ENCODE measurements at regions of chr12 and their contacts with region 1.

Region 1: DNA sequence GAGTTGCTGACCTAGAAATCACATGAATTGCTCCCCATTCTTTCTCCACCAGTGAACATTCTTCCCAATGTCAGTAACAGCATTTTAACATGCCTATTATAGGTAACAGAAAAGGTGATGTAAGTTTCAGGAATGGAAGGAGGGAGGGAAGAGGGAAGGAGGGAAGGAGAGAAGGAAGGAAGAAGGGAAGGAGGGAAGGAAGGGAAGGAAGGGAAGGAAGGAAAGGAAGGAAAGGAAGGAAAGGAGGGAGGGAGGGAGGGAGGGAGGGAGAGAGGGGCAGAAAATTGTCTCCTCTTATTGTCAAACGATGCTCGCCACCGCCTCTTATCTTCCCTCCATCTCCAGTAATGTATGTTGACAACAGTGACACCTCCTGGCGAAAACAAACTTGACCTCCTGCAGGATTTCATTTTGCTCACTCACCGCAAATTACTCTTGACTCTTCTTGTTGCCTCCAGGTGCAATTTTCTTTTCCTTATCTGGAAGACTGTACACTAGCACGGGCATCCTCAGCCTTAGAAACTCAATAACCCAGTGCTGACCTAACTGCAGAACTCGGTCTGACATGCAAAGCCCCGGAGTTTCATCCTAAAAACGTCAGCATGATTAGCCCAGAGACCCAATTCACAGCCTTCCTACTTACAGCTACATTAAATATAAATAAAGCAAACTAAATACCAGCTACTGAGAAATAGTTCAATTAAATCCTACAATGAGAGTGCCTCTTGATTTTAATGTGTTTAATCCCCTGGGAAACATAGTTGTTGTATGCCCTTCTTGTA is 512.5 kb upstream of the TMPO start:
- DNase-seq: peak; percentile 59
- H3K4me3 Mint-ChIP-seq: no peak overlapping the region
- H3K27ac Mint-ChIP-seq: no peak overlapping the region
- H3K4me1 Mint-ChIP-seq: no peaks in the 10 kb centered on the region
- H3K27me3 Mint-ChIP-seq: peaks cover 22% of the 10 kb centered on the region
- CTCF ChIP-seq: peak; percentile 52

Region 2: GRCh38 chr12:96578526-96579125 is 1424.3 kb before region 1 on chr12:
- CTCF ChIA-PET with region 1: interaction called, 4 read pairs
- POLR2A ChIA-PET with region 1: no interaction called
- intact Hi-C with region 1: loop called (anchors 10 kb)
- DNase-seq: peak; percentile 72
- H3K4me3 Mint-ChIP-seq: no peak overlapping the region
- H3K27ac Mint-ChIP-seq: no peak overlapping the region
- H3K4me1 Mint-ChIP-seq: no peaks in the 10 kb centered on the region
- H3K27me3 Mint-ChIP-seq: no peaks in the 10 kb centered on the region
- CTCF ChIP-seq: peak; percentile 60

Region 3: DNA sequence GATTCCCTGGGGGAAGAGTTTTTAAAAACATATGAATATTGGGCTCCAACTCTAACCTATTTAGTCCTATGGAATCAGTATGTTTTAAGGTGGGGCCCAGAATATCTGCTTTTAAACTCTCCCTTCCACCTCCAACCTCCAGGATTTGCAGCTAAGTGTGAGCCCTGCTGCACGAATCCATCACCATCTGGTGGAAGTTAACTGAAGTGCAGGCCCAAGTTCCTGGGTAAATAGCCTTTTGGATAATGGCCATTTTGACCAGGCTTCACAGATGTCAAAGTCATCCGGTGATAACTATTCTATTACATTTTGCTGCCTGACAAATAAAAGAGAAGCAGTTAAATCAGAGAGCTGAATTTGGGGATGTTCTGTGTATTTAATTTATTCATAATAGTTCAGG is 598.4 kb before region 1 on chr12:
- CTCF ChIA-PET with region 1: interaction called, 5 read pairs
- POLR2A ChIA-PET with region 1: no interaction called
- intact Hi-C with region 1: loop called (anchors 2 kb)
- DNase-seq: peak; percentile 43
- H3K4me3 Mint-ChIP-seq: no peak overlapping the region
- H3K27ac Mint-ChIP-seq: no peak overlapping the region
- H3K4me1 Mint-ChIP-seq: no peaks in the 10 kb centered on the region
- H3K27me3 Mint-ChIP-seq: no peaks in the 10 kb centered on the region
- CTCF ChIP-seq: peak; percentile 73

Region 4: GRCh38 chr12:97716356-97716755 is 286.5 kb before region 1 on chr12:
- CTCF ChIA-PET with region 1: no interaction called
- POLR2A ChIA-PET with region 1: no interaction called
- intact Hi-C with region 1: loop called (anchors 5 kb)
- DNase-seq: peak; percentile 27
- H3K4me3 Mint-ChIP-seq: no peak overlapping the region
- H3K27ac Mint-ChIP-seq: no peak overlapping the region
- H3K4me1 Mint-ChIP-seq: no peaks in the 10 kb centered on the region
- H3K27me3 Mint-ChIP-seq: no peaks in the 10 kb centered on the region
- CTCF ChIP-seq: peak; percentile 42

Region 5: GRCh38 chr12:97977870-97978405 is 25.0 kb before region 1 on chr12:
- CTCF ChIA-PET with region 1: no interaction called
- POLR2A ChIA-PET with region 1: no interaction called
- intact Hi-C with region 1: no loop called
- DNase-seq: no peak
- H3K4me3 Mint-ChIP-seq: no peak overlapping the region
- H3K27ac Mint-ChIP-seq: no peak overlapping the region
- H3K4me1 Mint-ChIP-seq: no peaks in the 10 kb centered on the region
- H3K27me3 Mint-ChIP-seq: no peaks in the 10 kb centered on the region
- CTCF ChIP-seq: no peak

Region 6: DNA sequence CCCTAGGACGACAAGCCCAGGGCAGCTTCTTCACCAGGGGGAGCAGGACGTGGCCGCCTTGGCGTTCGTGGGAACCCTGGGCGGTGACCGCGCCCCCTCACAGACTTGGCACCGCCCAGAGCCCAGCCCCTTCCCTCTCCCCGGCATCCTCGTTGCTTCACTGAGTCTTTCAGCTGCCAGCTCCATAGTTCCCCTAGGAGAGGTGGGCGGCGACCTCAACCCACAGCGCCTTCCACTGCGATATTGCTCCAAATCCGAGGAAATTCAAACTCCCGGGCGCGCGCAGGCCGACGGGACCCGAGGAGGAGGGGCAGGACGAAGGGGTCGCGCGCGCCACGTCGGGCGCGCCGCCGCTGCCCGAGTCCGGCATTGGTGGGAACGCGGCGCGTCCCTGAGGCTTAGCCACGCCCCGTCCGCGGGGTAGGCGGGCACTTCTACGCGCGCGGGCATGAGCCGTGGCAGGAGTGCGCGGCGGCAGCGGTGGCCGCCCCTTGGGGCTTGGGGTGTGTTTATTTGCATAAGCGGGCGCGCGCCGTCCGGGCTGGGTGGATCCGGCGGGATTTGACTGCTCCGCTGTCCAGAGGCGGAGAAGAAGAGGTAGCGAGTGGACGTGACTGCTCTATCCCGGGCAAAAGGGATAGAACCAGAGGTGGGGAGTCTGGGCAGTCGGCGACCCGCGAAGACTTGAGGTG is 642.0 kb after region 1 on chr12 and contains the starts of genes APAF1 and IKBIP:
- CTCF ChIA-PET with region 1: no interaction called
- POLR2A ChIA-PET with region 1: no interaction called
- intact Hi-C with region 1: loop called (anchors 5 kb)
- DNase-seq: peak; percentile 97
- H3K4me3 Mint-ChIP-seq: peak within 1 kb of the TSS; percentile 93
- H3K27ac Mint-ChIP-seq: peak within 1 kb of the TSS; percentile 93
- H3K4me1 Mint-ChIP-seq: peaks cover 7% of the 10 kb centered on the region
- H3K27me3 Mint-ChIP-seq: no peaks in the 10 kb centered on the region
- CTCF ChIP-seq: no peak
- total RNA-seq, gene APAF1: 5.9 and 9.1 TPM in 2 replicates
- total RNA-seq, gene IKBIP: 29.2 and 43.0 TPM in 2 replicates

Region 7: DNA sequence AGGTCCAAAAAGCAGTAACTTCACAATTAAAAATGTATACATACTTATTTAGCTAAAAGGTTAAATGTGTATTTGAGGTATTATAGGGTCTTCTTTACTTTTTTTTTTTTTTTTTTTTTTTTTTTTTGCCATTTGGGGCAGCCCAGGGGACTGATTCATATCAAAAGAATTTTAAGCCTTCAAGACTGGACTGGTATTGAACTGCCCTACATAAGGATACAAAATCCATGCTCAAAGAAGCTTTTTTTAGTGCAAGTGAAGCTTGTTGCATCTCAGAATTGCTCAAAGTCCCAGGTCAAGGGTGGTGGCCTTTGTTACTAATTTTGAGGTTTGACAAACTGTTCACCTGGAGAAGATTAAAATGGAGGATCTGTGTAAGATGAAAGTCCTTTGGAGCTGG is 766.2 kb after region 1 on chr12:
- CTCF ChIA-PET with region 1: no interaction called
- POLR2A ChIA-PET with region 1: no interaction called
- intact Hi-C with region 1: no loop called
- DNase-seq: no peak
- H3K4me3 Mint-ChIP-seq: no peak overlapping the region
- H3K27ac Mint-ChIP-seq: no peak overlapping the region
- H3K4me1 Mint-ChIP-seq: no peaks in the 10 kb centered on the region
- H3K27me3 Mint-ChIP-seq: no peaks in the 10 kb centered on the region
- CTCF ChIP-seq: no peak